Gastrocnemius medialis (tissue), 4 donors: ENCODE measurements at regions of chr1 and their contacts with region 1.

Region 1: GRCh38 chr1:150196417-150196816 is 39.5 kb downstream of the ANP32E start:
- DNase-seq: no peak
- ATAC-seq: no peak
- H3K4me3 ChIP-seq: no peak overlapping the region
- H3K27ac ChIP-seq: no peak overlapping the region
- H3K4me1 ChIP-seq: peaks cover 5 to 6% of the 10 kb centered on the region in 2 donors
- H3K27me3 ChIP-seq: no peaks in the 10 kb centered on the region
- CTCF ChIP-seq: no peak
- POLR2A ChIP-seq: no peak

Region 2: GRCh38 chr1:150121236-150121862 is 75.1 kb before region 1 on chr1:
- in situ Hi-C with region 1: no loop called
- intact Hi-C with region 1: no loop called
- DNase-seq: no peak
- ATAC-seq: no peak
- H3K4me3 ChIP-seq: no peak overlapping the region
- H3K27ac ChIP-seq: no peak overlapping the region
- H3K4me1 ChIP-seq: no peaks in the 10 kb centered on the region
- H3K27me3 ChIP-seq: no peaks in the 10 kb centered on the region
- CTCF ChIP-seq: no peak
- POLR2A ChIP-seq: no peak

Region 3: GRCh38 chr1:150141452-150141851 is 55.0 kb before region 1 on chr1:
- in situ Hi-C with region 1: no loop called
- intact Hi-C with region 1: loop called (anchors 2 kb)
- DNase-seq: no peak
- ATAC-seq: no peak
- H3K4me3 ChIP-seq: no peak overlapping the region
- H3K27ac ChIP-seq: peak overlapping the region in 1 of 4 donors; percentile 20
- H3K4me1 ChIP-seq: peaks cover 8 to 17% of the 10 kb centered on the region in 2 donors
- H3K27me3 ChIP-seq: no peaks in the 10 kb centered on the region
- CTCF ChIP-seq: no peak
- POLR2A ChIP-seq: no peak

Region 4: DNA sequence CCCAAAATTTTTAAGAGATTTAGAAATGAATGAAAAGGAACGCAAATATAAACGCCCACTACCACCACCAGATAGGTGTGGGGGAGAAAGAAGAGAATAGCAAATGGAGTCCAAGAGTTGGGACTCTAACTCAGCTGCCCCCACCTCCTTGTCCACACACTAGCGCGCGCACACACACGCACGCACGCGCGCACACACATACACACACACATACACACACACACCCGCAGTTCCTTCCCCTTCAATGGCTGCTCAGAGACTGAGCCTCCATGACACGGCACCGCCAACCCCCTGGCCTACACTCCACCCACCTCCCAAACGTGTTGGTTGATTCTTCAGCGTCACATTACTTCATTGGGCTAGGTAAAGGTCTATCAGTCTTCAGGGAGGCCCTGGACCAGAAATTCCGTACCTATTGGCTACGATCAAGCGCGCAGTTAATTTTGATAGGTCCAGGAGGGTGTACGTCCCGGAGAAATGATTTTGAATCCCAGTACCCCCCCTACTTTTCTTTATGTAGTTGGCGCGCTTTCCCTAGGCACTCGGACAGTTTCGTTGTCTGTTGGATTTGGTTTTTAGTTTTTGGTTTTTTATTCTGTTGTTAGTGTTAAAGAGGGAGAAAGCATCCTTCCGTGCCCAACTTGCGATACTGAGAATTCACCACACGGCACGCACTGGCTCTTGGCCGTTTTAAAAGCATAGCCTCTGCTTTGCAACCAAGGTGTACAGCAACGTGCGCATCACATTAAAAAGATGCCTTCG is 39.6 kb after region 1 on chr1 and contains the start of gene ANP32E:
- in situ Hi-C with region 1: no loop called
- intact Hi-C with region 1: no loop called
- DNase-seq: peak; percentile 97 to 98
- ATAC-seq: peak; percentile 96 to 98
- H3K4me3 ChIP-seq: peak within 1 kb of the TSS; percentile 83 to 89 (median 86)
- H3K27ac ChIP-seq: peak within 1 kb of the TSS; percentile 95 to 99 (median 98)
- H3K4me1 ChIP-seq: peaks cover 4 to 13% of the 10 kb centered on the region in 2 donors
- H3K27me3 ChIP-seq: no peaks in the 10 kb centered on the region
- CTCF ChIP-seq: peak in 4 of 5 experiments; percentile 10 to 25 (median 16)
- POLR2A ChIP-seq: peak; percentile 74 to 89
- total RNA-seq, gene ANP32E: 15.1 to 44.9 (median 24.9) TPM

Region 5: DNA sequence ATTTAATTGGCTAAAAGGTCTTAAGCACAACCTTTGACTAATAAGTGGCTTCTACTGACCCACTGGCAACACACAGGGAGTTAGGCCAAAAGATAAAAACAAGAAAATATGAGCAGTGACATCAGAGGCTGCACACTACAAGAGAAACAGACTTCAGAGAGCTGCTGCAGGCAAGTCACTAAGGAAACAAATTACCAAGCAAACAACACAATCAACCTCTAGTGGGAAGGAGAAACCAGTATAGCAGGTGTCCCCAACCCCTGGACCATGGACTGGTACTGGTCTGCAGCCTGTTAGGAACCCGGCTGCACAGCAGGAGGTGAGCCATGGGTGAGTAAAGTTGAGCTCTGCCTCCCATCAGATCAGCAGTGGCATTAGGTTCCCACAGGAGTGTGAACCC is 453.8 kb after region 1 on chr1:
- in situ Hi-C with region 1: no loop called
- intact Hi-C with region 1: no loop called
- DNase-seq: no peak
- ATAC-seq: no peak
- H3K4me3 ChIP-seq: no peak overlapping the region
- H3K27ac ChIP-seq: no peak overlapping the region
- H3K4me1 ChIP-seq: no peaks in the 10 kb centered on the region
- H3K27me3 ChIP-seq: no peaks in the 10 kb centered on the region
- CTCF ChIP-seq: no peak
- POLR2A ChIP-seq: no peak